Testis (tissue), 5 donors: ENCODE measurements at regions of chr19 and their contacts with region 1.

Region 1: GRCh38 chr19:29610563-29611271 is 4.6 kb downstream of the POP4 start:
- DNase-seq: peak; percentile 96
- H3K4me3 ChIP-seq: no peak overlapping the region
- H3K27ac ChIP-seq: peak overlapping the region; percentile 7 to 36
- H3K4me1 ChIP-seq: peaks cover 12% of the 10 kb centered on the region
- H3K27me3 ChIP-seq: no peaks in the 10 kb centered on the region
- CTCF ChIP-seq: peak; percentile 76 to 86 (median 81)
- POLR2A ChIP-seq: no peak

Region 2: GRCh38 chr19:29564574-29565005 is 46.1 kb before region 1 on chr19:
- intact Hi-C with region 1: no loop called
- DNase-seq: no peak
- H3K4me3 ChIP-seq: no peak overlapping the region
- H3K27ac ChIP-seq: no peak overlapping the region
- H3K4me1 ChIP-seq: no peaks in the 10 kb centered on the region
- H3K27me3 ChIP-seq: no peaks in the 10 kb centered on the region
- CTCF ChIP-seq: no peak
- POLR2A ChIP-seq: no peak

Region 3: DNA sequence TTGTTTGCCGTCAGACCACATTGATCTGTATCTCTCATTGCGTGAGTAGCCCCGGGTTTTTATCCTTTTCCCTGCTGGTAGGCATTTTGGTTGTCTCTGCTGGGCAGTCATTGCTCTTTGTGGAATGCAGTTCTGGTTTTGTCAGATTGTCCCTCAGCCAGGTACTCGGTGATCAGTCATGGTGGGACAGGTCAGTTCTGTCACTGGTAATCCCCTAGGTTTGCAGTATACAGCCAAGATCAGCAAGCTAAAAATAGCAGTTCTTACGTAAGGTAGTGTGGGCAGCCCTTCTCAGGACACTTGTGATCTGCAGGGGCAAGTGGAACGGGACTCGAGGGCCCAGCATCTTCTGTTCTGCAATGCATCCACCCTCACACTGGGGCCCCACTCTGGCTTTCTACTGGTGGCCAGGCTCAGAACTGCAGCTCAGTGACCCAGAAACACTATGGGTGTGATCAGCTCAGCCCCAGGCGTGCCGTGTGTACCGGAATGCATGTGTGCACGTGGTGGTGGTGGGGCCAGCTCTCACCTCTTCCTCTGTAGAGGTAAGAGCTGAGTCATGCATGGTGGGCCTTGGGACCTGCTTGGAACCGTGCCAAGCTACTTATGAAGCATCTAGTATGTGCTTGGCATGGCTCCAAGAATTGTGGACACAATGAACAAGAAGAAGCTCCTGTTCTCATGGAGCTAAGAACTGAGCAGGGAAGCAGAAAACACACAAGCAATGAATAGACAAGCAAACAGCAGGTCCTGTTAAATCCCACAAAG is 60.9 kb after region 1 on chr19:
- intact Hi-C with region 1: no loop called
- DNase-seq: peak; percentile 46
- H3K4me3 ChIP-seq: no peak overlapping the region
- H3K27ac ChIP-seq: no peak overlapping the region
- H3K4me1 ChIP-seq: peaks cover 47% of the 10 kb centered on the region
- H3K27me3 ChIP-seq: no peaks in the 10 kb centered on the region
- CTCF ChIP-seq: peak in 1 of 3 experiments; percentile 11
- POLR2A ChIP-seq: no peak

Region 4: DNA sequence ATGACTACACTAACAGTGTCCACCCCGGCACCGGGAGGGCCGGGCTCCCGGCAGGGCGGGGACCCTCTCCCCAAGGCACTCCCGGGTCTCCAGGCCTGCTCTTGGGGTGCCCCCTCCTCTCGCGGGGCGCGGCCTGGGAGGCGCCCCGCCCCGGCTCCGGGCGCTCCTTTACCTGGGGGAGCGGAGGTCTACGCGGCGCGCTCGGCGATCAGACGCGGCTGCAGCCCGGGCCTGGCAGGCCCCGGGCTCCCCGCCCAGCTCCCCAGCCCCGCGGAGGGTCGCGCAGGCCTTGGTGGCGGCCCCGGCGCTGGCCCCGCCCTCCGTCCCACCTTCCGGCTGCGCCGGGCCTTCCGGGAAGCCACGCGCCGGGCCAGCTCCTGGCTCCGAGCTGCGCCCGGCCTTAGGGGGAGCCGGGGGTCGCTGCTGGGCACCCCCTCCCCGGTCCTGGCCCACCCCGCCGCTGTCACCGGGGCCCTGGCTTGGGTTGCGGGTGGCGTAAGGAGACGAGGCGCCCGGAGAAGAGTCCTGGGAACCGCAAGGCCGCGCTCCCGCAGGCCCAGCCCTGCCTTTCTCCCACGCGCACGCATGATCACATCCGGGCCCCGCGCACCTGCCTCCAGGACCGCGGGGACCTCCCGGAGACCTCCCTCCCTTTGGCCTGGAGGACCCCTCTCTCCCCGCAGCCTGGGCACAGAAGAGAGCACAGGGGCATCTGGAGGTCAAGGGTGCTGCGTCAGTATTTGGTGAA is 104.4 kb after region 1 on chr19 and contains the start of gene C19orf12:
- intact Hi-C with region 1: loop called (anchors 5 kb)
- DNase-seq: peak; percentile 75
- H3K4me3 ChIP-seq: peak within 1 kb of the TSS; percentile 91
- H3K27ac ChIP-seq: peak within 1 kb of the TSS; percentile 92 to 95
- H3K4me1 ChIP-seq: peaks cover 25% of the 10 kb centered on the region
- H3K27me3 ChIP-seq: no peaks in the 10 kb centered on the region
- CTCF ChIP-seq: no peak
- POLR2A ChIP-seq: no peak
- total RNA-seq, gene C19orf12: 28.8 to 40.5 TPM